ENCODE measurements at regions of chr18 and their contacts with region 1.

Region 1: DNA sequence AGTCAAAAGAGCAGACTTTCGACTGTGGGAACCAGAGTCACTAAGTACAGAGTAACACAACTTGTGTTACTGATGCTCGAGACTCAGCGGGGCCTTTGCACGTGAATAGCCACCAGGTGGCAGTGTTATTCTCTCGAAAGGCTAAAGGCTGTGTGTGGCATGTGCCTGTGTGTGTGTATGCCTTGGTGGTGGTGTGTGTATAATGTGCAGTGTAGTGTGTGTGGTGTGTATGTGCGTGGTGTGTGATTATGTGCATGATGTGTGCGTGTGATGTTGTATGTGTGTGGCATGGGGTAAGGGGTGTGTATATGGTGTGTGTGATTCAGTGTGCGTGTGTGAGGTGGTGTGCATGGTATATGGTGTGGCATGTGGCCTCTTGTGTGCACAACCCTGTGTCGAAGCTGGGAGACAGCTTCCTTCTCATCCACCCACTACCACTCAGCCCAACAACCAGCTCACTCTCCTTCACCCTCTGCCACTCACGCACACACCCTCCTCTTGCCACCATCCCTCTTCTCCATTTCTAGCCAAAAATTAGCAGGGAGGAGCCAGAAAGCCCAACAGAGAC is 83.0 kb upstream of the ZNF532 start:
- DNase-seq: peak; percentile 84
- H3K4me3 Mint-ChIP-seq: no peak overlapping the region
- H3K27ac Mint-ChIP-seq: no peak overlapping the region
- H3K4me1 Mint-ChIP-seq: peaks cover 24% of the 10 kb centered on the region
- H3K27me3 Mint-ChIP-seq: no peaks in the 10 kb centered on the region
- CTCF ChIP-seq: peak; percentile 87

Region 2: DNA sequence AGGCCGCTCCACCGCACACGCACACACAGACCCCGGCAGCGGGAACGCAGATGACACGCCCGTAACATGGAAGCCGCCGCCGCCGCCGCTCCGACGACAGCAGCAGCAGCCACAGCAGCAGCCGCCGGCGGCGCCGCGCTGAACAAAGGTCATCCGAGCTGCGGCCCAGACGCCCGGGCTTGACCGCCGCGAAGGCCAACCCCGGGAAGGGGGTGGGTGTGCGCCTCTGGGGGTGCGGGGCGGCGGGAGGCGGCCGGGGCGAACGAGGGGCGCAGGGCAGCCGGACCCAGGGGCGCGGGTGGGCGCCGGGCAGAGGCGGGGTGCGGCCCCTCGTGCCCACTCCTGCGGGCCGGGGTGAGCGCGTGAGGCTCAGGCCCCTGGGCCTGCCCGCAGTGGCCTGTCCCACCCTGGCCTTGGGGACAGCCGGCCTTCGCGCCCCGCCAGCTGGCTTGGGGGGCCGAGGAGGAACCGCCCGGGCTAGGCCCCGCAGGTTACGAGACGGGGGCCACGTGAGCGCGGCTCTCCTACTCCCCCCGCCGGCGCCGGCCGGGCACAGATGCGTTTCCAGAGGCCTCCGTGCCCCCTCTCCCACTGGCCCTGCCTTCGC is 81.9 kb after region 1 on chr18:
- CTCF ChIA-PET with region 1: interaction called, 3 read pairs
- POLR2A ChIA-PET with region 1: no interaction called
- intact Hi-C with region 1: loop called (anchors 10 kb)
- DNase-seq: no peak
- H3K4me3 Mint-ChIP-seq: peak overlapping the region; percentile 65
- H3K27ac Mint-ChIP-seq: peak overlapping the region; percentile 87
- H3K4me1 Mint-ChIP-seq: peaks cover 38% of the 10 kb centered on the region
- H3K27me3 Mint-ChIP-seq: no peaks in the 10 kb centered on the region
- CTCF ChIP-seq: no peak

Region 3: DNA sequence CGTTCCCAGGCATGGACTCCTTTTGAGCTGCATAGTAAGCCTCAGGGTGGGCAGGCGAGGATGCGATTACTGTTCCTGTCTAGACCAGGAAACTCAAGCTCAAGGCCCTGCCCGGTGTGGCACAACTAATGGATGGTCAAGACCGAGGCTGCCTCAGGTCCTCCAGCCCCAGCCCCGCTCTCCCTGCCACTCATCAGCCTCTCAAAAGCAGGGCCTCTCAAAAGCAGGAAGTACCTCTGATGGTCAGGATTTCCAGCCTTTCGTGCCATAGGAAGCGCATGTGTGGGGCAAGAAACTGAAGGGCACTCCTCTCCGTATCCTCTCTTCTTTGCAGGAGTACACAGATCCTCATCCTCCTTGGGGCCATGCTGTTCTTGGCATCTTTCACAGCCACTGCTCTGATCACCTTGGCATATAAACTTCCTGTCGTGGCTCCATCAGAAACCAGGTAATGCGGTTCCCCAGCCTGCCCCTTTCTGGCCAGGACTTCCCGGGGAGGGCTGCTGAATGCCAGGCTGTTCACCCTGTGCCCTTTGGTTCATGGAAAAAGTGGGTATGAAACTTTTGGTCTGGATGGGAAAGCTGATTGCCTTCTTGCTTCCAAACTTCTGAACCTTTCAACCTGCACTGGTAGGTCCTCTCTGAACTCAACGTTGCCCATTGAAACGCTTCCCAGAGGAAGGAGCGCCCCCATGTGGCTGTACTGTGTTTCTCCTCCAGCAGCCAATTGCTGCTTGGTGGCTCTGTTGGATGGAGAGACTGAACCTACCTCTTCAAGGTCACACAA is 275.2 kb after region 1 on chr18:
- CTCF ChIA-PET with region 1: interaction called, 71 read pairs
- POLR2A ChIA-PET with region 1: interaction called, 4 read pairs
- intact Hi-C with region 1: loop called (anchors 1 kb)
- DNase-seq: peak; percentile 71
- H3K4me3 Mint-ChIP-seq: no peak overlapping the region
- H3K27ac Mint-ChIP-seq: no peak overlapping the region
- H3K4me1 Mint-ChIP-seq: peaks cover 11% of the 10 kb centered on the region
- H3K27me3 Mint-ChIP-seq: no peaks in the 10 kb centered on the region
- CTCF ChIP-seq: peak; percentile 58